ENCODE measurements at regions of chr5 and their contacts with region 1.

Region 1: GRCh38 chr5:93894601-93895354 is 153.4 kb upstream of the POU5F2 start:
- DNase-seq: no peak
- H3K4me3 ChIP-seq: no peak overlapping the region
- H3K27ac ChIP-seq: no peak overlapping the region
- H3K4me1 ChIP-seq: no peaks in the 10 kb centered on the region
- H3K27me3 ChIP-seq: no peaks in the 10 kb centered on the region
- CTCF ChIP-seq: peak; percentile 66

Region 2: GRCh38 chr5:93831449-93831848 is 63.3 kb before region 1 on chr5:
- CTCF ChIA-PET with region 1: no interaction called
- dilution Hi-C with region 1: no loop called
- in situ Hi-C with region 1: no loop called
- intact Hi-C with region 1: loop called (anchors 1 kb)
- DNase-seq: peak; percentile 85
- H3K4me3 ChIP-seq: no peak overlapping the region
- H3K27ac ChIP-seq: no peak overlapping the region
- H3K4me1 ChIP-seq: peaks cover 10% of the 10 kb centered on the region
- H3K27me3 ChIP-seq: no peaks in the 10 kb centered on the region
- CTCF ChIP-seq: peak in 1 of 2 donors; percentile 11

Region 3: GRCh38 chr5:94802450-94802849 is 907.7 kb after region 1 on chr5:
- CTCF ChIA-PET with region 1: no interaction called
- dilution Hi-C with region 1: no loop called
- in situ Hi-C with region 1: no loop called
- intact Hi-C with region 1: no loop called
- DNase-seq: no peak
- H3K4me3 ChIP-seq: no peak overlapping the region
- H3K27ac ChIP-seq: no peak overlapping the region
- H3K4me1 ChIP-seq: no peaks in the 10 kb centered on the region
- H3K27me3 ChIP-seq: no peaks in the 10 kb centered on the region
- CTCF ChIP-seq: no peak

Measured in mammary epithelial cell (primary cell).